ENCODE measurements at regions of chr4 and their contacts with region 1.

Region 1: GRCh38 chr4:21652508-21653231 is 295.9 kb downstream of the KCNIP4 start:
- DNase-seq: no peak
- H3K4me3 ChIP-seq: no peak overlapping the region
- H3K27ac ChIP-seq: no peak overlapping the region
- H3K4me1 ChIP-seq: no peaks in the 10 kb centered on the region
- H3K27me3 ChIP-seq: no peaks in the 10 kb centered on the region
- CTCF ChIP-seq: no peak
- POLR2A ChIP-seq: no peak

Region 2: DNA sequence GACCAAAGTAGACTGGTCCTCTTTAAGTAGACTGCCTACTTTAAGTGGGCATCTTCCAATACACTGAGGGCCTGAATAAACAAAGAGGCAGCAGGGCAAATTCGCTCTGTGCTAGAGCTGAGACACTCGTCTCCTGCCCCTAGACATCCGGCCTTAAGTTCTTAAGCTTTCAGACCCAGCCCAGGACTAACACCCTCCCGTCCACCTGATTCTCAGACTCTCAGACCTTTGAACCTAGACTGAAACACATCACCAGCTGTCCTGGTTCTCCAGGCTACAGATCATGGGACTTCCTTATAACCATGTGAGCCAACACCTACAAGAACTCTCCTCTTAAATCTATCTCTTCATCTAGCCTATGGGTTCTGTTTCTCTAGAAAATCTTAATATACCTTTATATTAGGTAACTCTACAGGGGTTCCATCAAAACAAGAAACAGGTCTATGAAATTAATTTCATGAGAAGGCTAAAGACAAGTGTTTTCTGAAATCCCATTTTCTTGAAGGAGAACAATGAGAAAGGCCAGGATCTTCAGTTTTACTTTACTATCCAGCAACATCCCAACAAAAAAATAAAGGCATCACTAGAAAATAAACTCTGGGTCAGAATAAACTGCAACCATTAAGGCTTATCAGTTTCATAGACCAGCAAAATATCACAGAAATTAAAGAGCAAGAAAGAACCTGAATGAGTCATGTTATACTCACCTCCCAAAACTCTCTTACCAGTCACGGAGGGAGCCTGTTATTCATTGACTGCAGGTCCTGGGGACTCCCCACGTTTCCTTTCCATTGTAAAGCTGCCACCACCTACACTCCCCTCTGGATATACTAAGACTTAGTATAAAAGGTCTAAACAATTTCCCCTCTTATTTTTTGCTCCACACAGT is 848.4 kb after region 1 on chr4:
- intact Hi-C with region 1: loop called (anchors 5 kb)
- DNase-seq: no peak
- H3K4me3 ChIP-seq: no peak overlapping the region
- H3K27ac ChIP-seq: peak overlapping the region in 1 of 2 donors; percentile 85
- H3K4me1 ChIP-seq: peaks cover 0 to 10% of the 10 kb centered on the region in 2 donors
- H3K27me3 ChIP-seq: no peaks in the 10 kb centered on the region
- CTCF ChIP-seq: no peak
- POLR2A ChIP-seq: no peak